Posterior cingulate gyrus (tissue), 11 donors: ENCODE measurements at regions of chr21 and their contacts with region 1.

Region 1: GRCh38 chr21:43728467-43729390 is 9.8 kb downstream of the PDXK start:
- DNase-seq: peak; percentile 85 to 99 (median 93)

Region 2: GRCh38 chr21:43667191-43667904 is 61.4 kb before region 1 on chr21:
- intact Hi-C with region 1: loop called (anchors 10 kb)
- DNase-seq: no peak